ENCODE measurements at regions of chr5 and their contacts with region 1.

Region 1: GRCh38 chr5:143635146-143635752 is 176.7 kb upstream of the HMHB1 start:
- DNase-seq: peak; percentile 63
- ATAC-seq: peak; percentile 84
- H3K4me3 ChIP-seq: no peak overlapping the region
- H3K27ac ChIP-seq: peak overlapping the region; percentile 61
- H3K4me1 ChIP-seq: peaks cover 40% of the 10 kb centered on the region
- H3K27me3 ChIP-seq: no peaks in the 10 kb centered on the region
- CTCF ChIP-seq: no peak

Region 2: DNA sequence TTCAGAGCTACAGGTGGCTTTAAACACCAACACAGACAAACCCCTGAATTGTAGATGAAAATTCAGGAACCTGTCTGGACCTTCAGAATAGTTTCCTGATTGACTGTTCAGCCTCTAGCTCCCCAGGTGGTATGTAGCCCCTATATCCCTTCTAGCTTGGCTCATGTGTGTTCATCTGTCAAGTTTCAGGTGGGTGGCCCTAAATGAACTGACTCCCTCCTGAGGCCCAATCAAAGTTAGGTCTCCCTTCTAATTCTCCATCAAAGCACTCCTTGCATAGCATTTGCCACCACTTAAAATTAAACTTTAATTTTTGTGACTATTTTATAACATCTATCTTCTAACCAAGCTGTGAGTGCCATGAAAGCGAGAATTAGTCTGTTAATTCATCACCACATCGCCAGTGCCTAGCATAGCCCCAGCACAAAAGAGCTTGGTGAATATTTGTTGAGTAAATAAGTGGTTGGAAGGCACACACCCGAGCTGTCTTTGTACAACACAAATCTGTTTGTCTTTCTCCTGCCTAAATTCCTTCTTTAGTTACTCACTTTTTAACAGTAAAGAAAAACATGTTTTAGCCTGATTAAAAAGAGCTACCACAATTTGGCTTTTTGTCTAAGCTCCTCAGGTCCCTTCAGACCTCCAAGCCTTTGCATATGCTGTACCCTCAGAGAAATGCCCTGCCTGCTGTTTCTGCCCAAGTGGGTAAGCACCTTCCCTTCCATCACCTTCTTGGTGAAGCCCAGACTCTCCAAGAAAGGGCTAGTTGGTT is 38.6 kb after region 1 on chr5:
- CTCF ChIA-PET with region 1: no interaction called
- POLR2A ChIA-PET with region 1: no interaction called
- intact Hi-C with region 1: loop called (anchors 2 kb)
- DNase-seq: peak; percentile 72
- ATAC-seq: peak; percentile 99
- H3K4me3 ChIP-seq: no peak overlapping the region
- H3K27ac ChIP-seq: peak overlapping the region; percentile 70
- H3K4me1 ChIP-seq: peaks cover 18% of the 10 kb centered on the region
- H3K27me3 ChIP-seq: no peaks in the 10 kb centered on the region
- CTCF ChIP-seq: no peak